Activated CD4-positive, alpha-beta memory T cell treated with anti-CD3 and anti-CD28 coated beads, Interleukin-2, amount 10 ng/mL, durations not matched to agents 7 days and 5 days (primary cell): ENCODE measurements at regions of chr15 and their contacts with region 1.

Region 1: GRCh38 chr15:65530314-65531122 is at the start of gene HACD3:
- DNase-seq: peak; percentile 89
- H3K4me3 Mint-ChIP-seq: peak within 1 kb of the TSS; percentile 81
- H3K27ac Mint-ChIP-seq: peak within 1 kb of the TSS; percentile 74
- H3K4me1 Mint-ChIP-seq: peaks cover 35% of the 10 kb centered on the region
- H3K27me3 Mint-ChIP-seq: no peaks in the 10 kb centered on the region
- total RNA-seq, gene HACD3: 26.8 to 29.2 TPM

Region 2: GRCh38 chr15:65516997-65517865 is 13.3 kb before region 1 on chr15 and contains the start of gene DPP8:
- CTCF ChIA-PET with region 1: interaction called, 13 read pairs
- POLR2A ChIA-PET with region 1: interaction called, 9 read pairs
- DNase-seq: peak; percentile 95
- H3K4me3 Mint-ChIP-seq: peak within 1 kb of the TSS; percentile 96
- H3K27ac Mint-ChIP-seq: peak within 1 kb of the TSS; percentile 95
- H3K4me1 Mint-ChIP-seq: peaks cover 40% of the 10 kb centered on the region
- H3K27me3 Mint-ChIP-seq: no peaks in the 10 kb centered on the region
- total RNA-seq, gene DPP8: 38.2 to 42.7 TPM

Region 3: DNA sequence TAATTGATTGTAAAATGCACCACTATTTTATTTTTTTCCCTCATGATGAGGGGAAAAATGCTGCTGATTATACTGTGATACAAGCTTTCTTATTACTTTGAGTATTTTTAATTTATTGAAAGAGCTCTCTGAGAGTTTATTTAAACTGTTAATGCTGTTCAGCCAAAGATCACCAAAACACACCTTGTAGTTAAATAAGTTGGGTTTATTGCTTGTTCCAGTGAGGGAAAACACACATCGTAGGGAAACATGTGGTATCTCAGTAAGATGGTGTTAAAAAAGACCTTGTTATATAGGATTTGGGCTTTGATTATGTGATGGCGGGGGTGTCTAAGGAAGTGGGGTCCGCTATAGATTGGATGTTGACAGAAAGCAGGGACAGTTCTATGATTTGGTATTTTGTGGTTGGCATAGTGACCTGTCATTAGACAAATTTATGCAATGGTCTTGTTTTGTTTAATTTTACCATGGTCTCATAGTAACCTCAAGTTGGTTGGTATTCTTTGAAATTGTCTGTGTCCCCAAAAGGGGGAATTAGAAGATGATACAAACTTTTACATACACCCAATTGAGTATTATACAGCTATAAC is 10.8 kb after region 1 on chr15:
- CTCF ChIA-PET with region 1: interaction called, 3 read pairs
- POLR2A ChIA-PET with region 1: interaction called, 13 read pairs
- DNase-seq: no peak
- H3K4me3 Mint-ChIP-seq: no peak overlapping the region
- H3K27ac Mint-ChIP-seq: no peak overlapping the region
- H3K4me1 Mint-ChIP-seq: peaks cover 2% of the 10 kb centered on the region
- H3K27me3 Mint-ChIP-seq: no peaks in the 10 kb centered on the region